ENCODE measurements at regions of chr1 and their contacts with region 1.

Region 1: DNA sequence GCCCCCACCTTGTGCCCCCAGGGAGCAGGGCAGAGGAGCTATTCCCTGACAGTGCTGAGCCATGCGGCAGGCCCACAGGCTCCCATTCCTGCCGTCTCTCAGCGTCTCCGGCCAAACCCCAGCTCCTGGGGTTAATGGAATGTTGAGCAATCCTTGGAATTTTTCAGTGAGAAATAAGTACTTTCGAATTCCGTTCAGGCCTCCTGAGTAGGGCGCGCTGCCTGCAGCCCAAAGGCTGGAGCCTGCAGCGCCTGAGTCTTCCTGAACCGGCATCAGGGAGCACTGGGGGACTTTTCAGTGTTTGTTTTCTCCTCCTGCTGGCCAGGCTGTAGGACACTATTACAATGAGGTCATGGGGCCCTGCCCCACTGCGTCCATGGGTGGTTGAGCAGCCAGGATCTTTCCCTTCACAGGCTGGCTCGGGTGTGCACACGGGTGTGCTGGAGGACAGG is 33.3 kb upstream of the CSF1 start:
- DNase-seq: peak; percentile 94
- ATAC-seq: peak; percentile 92
- H3K4me3 ChIP-seq: no peak overlapping the region
- H3K27ac ChIP-seq: peak overlapping the region; percentile 94
- H3K4me1 ChIP-seq: peaks cover 32% of the 10 kb centered on the region
- H3K27me3 ChIP-seq: no peaks in the 10 kb centered on the region
- CTCF ChIP-seq: peak; percentile 35; the same call in 1 of the 2 replicates
- POLR2A ChIP-seq: no peak
- RAD21 ChIP-seq: peak; percentile 48

Region 2: GRCh38 chr1:109783429-109783831 is 93.9 kb before region 1 on chr1:
- CTCF ChIA-PET with region 1: no interaction called
- POLR2A ChIA-PET with region 1: no interaction called
- dilution Hi-C with region 1: no loop called
- in situ Hi-C with region 1: no loop called
- intact Hi-C with region 1: loop called (anchors 1 kb)
- DNase-seq: peak; percentile 76
- ATAC-seq: peak; percentile 47
- H3K4me3 ChIP-seq: no peak overlapping the region
- H3K27ac ChIP-seq: peak overlapping the region; percentile 30
- H3K4me1 ChIP-seq: peaks cover 27% of the 10 kb centered on the region
- H3K27me3 ChIP-seq: no peaks in the 10 kb centered on the region
- CTCF ChIP-seq: no peak
- POLR2A ChIP-seq: no peak
- RAD21 ChIP-seq: no peak

Region 3: GRCh38 chr1:109827466-109827865 is 49.9 kb before region 1 on chr1:
- CTCF ChIA-PET with region 1: no interaction called
- POLR2A ChIA-PET with region 1: no interaction called
- dilution Hi-C with region 1: no loop called
- in situ Hi-C with region 1: no loop called
- intact Hi-C with region 1: loop called (anchors 5 kb)
- DNase-seq: no peak
- ATAC-seq: no peak
- H3K4me3 ChIP-seq: no peak overlapping the region
- H3K27ac ChIP-seq: no peak overlapping the region
- H3K4me1 ChIP-seq: peaks cover 18% of the 10 kb centered on the region
- H3K27me3 ChIP-seq: no peaks in the 10 kb centered on the region
- CTCF ChIP-seq: no peak
- POLR2A ChIP-seq: no peak
- RAD21 ChIP-seq: no peak

Region 4: GRCh38 chr1:109864047-109864822 is 13.1 kb before region 1 on chr1:
- CTCF ChIA-PET with region 1: interaction called, 3 read pairs
- POLR2A ChIA-PET with region 1: no interaction called
- dilution Hi-C with region 1: no loop called
- in situ Hi-C with region 1: no loop called
- intact Hi-C with region 1: loop called (anchors 1 kb)
- DNase-seq: peak; percentile 28
- ATAC-seq: peak; percentile 69
- H3K4me3 ChIP-seq: no peak overlapping the region; the same call in 1 of the 2 replicates
- H3K27ac ChIP-seq: peak overlapping the region; percentile 53; the same call in 1 of the 2 replicates
- H3K4me1 ChIP-seq: peaks cover 10% of the 10 kb centered on the region
- H3K27me3 ChIP-seq: no peaks in the 10 kb centered on the region
- CTCF ChIP-seq: no peak
- POLR2A ChIP-seq: no peak
- RAD21 ChIP-seq: no peak

Region 5: DNA sequence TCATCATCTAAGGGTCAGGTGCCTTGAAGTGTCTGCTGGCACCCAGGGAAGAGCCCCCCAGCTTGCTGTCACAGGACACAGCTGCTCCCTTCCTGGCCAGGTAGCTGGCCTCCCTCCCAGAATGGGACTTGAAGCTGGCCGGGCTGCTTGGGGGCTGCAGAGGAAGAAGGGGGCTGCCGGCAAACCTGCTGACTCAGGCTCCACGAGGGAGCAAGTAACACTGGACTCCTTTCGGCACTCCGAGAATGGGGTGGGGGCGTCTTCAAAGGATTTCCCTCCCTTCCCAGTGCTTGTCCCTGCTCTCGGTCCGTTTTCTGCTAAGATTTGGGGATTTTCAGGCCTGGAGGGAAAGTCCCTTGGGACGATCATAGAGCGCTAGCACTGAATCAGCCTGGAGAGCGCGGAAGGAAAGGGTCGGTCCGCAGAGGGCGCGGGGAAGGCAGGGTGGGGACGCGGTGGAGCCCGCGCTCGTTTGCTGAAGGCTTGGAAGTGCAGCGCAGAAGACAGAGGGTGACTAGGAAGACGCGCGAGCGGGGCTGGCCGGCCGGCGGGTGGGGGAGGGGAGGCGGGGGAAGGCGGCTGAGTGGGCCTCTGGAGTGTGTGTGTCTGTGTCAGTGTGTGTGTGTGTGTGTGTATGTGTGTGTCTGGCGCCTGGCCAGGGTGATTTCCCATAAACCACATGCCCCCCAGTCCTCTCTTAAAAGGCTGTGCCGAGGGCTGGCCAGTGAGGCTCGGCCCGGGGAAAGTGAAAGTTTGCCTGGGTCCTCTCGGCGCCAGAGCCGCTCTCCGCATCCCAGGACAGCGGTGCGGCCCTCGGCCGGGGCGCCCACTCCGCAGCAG is 33.0 kb after region 1 on chr1 and contains the start of gene CSF1:
- CTCF ChIA-PET with region 1: no interaction called
- POLR2A ChIA-PET with region 1: no interaction called
- dilution Hi-C with region 1: no loop called
- in situ Hi-C with region 1: no loop called
- intact Hi-C with region 1: loop called (anchors 1 kb)
- DNase-seq: peak; percentile 86
- ATAC-seq: peak; percentile 68
- H3K4me3 ChIP-seq: peak within 1 kb of the TSS; percentile 98
- H3K27ac ChIP-seq: peak within 1 kb of the TSS; percentile 85
- H3K4me1 ChIP-seq: peaks cover 25% of the 10 kb centered on the region
- H3K27me3 ChIP-seq: no peaks in the 10 kb centered on the region; the same call in 1 of the 2 replicates
- CTCF ChIP-seq: no peak
- POLR2A ChIP-seq: peak; percentile 84
- RAD21 ChIP-seq: peak; percentile 4; the same call in 1 of the 2 replicates
- total RNA-seq, gene CSF1: 9.4 and 14.3 TPM in 2 replicates